Sigmoid colon (tissue), 7 donors: ENCODE measurements at regions of chr14 and their contacts with region 1.

Region 1: DNA sequence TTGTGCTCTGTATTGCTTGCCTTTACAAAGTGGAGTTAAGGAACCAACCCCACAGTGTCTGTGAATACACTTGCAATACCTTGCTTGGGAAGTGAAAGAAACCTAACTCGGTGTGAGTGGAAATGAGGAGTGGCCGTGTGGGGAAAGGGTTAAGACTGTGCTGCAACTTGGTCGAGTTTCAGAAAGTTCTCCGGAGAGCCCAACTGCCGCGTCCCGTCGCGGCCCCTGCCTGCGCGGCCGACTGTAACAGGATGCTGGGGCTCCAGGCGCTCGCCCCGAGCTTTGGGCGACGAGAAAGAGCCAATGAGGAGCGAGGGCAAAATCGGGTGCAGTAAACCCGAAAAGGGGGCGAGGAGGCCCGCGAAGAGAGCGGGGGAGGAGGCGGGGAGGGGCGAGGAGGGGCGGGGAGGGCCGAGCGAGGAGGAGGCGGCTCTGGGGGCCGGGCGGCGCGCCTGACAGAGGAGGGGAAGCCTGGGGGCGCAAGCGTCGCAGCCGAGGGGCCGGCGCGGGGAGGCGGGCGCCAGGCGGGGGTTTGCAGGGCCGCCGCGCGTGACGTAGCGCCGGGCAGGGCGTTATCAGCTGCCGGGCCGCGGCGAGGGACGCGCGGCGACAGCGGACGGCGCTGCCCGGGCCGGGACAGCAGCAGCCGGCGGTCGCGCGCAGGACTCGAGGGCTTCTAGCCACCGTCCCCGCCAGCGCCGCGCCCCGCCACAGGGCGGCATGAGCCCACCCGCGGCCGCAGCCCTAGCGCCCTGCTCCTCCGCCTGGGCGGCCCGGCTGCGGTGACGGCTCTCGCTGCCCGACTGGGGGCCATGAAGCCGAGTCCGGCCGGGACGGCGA is at the start of gene DACT1:
- DNase-seq: peak; percentile 84
- H3K4me3 ChIP-seq: peak within 1 kb of the TSS; percentile 44 to 91 (median 78)
- H3K27ac ChIP-seq: peak within 1 kb of the TSS; percentile 87 to 97 (median 93)
- H3K4me1 ChIP-seq: peaks cover 0 to 48% (median 23%) of the 10 kb centered on the region in 4 donors
- H3K27me3 ChIP-seq: no peaks in the 10 kb centered on the region
- CTCF ChIP-seq: no peak
- EP300 ChIP-seq: no peak
- POLR2A ChIP-seq: no peak
- total RNA-seq, gene DACT1: 5.9 to 21.2 (median 12.1) TPM

Region 2: GRCh38 chr14:58501214-58501816 is 136.3 kb before region 1 on chr14:
- intact Hi-C with region 1: loop called (anchors 2 kb)
- DNase-seq: no peak
- H3K4me3 ChIP-seq: no peak overlapping the region
- H3K27ac ChIP-seq: no peak overlapping the region
- H3K4me1 ChIP-seq: no peaks in the 10 kb centered on the region
- H3K27me3 ChIP-seq: no peaks in the 10 kb centered on the region
- CTCF ChIP-seq: peak; percentile 63 to 85 (median 78)
- EP300 ChIP-seq: no peak
- POLR2A ChIP-seq: no peak

Region 3: GRCh38 chr14:58565832-58566231 is 71.8 kb before region 1 on chr14:
- intact Hi-C with region 1: loop called (anchors 5 kb)
- DNase-seq: no peak
- H3K4me3 ChIP-seq: no peak overlapping the region
- H3K27ac ChIP-seq: peak overlapping the region in 2 of 4 donors; percentile 25 to 51
- H3K4me1 ChIP-seq: peaks cover 0 to 41% (median 32%) of the 10 kb centered on the region in 4 donors
- H3K27me3 ChIP-seq: no peaks in the 10 kb centered on the region
- CTCF ChIP-seq: no peak
- EP300 ChIP-seq: no peak
- POLR2A ChIP-seq: no peak

Region 4: DNA sequence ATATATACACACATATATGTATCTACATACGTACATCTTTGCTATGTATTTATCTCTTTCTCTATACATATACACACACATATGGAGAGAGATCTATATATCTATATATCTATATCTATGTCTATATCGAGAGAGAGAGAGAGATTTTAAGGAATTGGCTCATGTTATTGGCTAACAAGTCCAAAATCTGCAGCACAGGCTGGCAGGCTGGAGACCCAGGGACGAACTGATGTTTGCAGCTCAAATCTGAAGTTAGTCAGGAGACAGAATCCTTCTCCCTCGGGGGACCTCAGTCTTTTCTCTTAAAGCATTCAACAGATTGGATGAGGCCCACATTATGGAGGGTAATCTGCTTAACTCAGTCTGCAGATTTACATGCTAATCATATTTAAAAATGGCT is 40.6 kb before region 1 on chr14:
- intact Hi-C with region 1: no loop called
- DNase-seq: no peak
- H3K4me3 ChIP-seq: no peak overlapping the region
- H3K27ac ChIP-seq: no peak overlapping the region
- H3K4me1 ChIP-seq: no peaks in the 10 kb centered on the region
- H3K27me3 ChIP-seq: no peaks in the 10 kb centered on the region
- CTCF ChIP-seq: no peak
- EP300 ChIP-seq: no peak
- POLR2A ChIP-seq: no peak

Region 5: GRCh38 chr14:58731465-58732330 is 94.1 kb after region 1 on chr14:
- intact Hi-C with region 1: no loop called
- DNase-seq: no peak
- H3K4me3 ChIP-seq: no peak overlapping the region
- H3K27ac ChIP-seq: peak overlapping the region in 1 of 4 donors; percentile 5
- H3K4me1 ChIP-seq: peaks cover 0 to 13% (median 7%) of the 10 kb centered on the region in 4 donors
- H3K27me3 ChIP-seq: no peaks in the 10 kb centered on the region
- CTCF ChIP-seq: no peak
- EP300 ChIP-seq: no peak
- POLR2A ChIP-seq: no peak

Region 6: DNA sequence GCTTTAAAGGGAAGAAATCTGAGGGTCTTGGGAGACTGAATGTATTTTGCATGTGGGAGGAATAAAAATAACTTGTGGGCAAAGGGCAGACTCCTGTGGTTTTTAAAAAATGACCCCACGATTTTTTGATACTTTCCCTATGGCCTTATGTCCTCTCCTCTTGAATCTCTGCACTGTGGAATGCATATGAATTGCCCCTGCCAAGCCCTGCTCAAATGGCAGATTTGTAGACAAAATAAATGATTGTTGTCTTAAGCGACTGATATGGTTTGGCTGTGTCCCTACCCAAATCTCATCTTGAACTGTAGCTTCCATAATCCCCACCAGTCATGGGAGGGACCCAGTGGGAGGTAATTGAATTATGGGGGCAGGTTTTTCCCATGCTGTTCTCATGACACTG is 224.0 kb after region 1 on chr14:
- intact Hi-C with region 1: no loop called
- DNase-seq: no peak
- H3K4me3 ChIP-seq: no peak overlapping the region
- H3K27ac ChIP-seq: no peak overlapping the region
- H3K4me1 ChIP-seq: no peaks in the 10 kb centered on the region
- H3K27me3 ChIP-seq: no peaks in the 10 kb centered on the region
- CTCF ChIP-seq: no peak
- EP300 ChIP-seq: no peak
- POLR2A ChIP-seq: no peak

Region 7: GRCh38 chr14:59028476-59029202 is 391.0 kb after region 1 on chr14:
- intact Hi-C with region 1: loop called (anchors 10 kb)
- DNase-seq: peak; percentile 70
- H3K4me3 ChIP-seq: no peak overlapping the region
- H3K27ac ChIP-seq: no peak overlapping the region
- H3K4me1 ChIP-seq: peaks cover 0 to 10% (median 5%) of the 10 kb centered on the region in 4 donors
- H3K27me3 ChIP-seq: no peaks in the 10 kb centered on the region
- CTCF ChIP-seq: peak in 3 of 4 experiments; percentile 48 to 78 (median 57)
- EP300 ChIP-seq: no peak
- POLR2A ChIP-seq: no peak

Region 8: DNA sequence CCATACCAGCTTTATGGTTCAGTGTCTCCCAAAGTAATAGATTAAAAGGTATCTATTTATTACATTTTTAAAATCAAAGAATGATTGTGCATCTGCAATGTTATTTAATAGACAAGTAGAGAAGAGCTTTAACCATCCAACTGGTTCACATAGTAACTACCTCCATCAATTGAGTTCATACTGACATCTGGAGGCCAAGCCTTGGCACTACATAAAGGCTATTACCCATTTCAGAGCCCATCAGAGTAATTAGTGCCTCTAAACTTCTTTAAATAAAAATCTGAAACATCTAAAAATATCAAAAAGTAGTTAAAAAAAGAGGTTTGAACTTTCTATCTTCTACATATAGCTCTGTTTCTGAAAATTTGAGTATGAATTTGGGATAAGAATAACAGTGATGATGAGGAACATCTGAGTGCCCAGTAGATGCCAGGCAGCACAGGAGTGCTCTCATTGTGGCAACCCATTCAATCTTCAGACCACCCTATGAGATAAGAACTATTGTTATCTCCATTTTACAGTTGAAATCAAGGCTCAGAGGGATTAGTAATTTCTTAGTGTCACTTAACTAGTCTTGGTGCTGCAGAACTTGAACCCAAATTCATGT is 417.9 kb after region 1 on chr14:
- intact Hi-C with region 1: loop called (anchors 2 kb)
- DNase-seq: no peak
- H3K4me3 ChIP-seq: no peak overlapping the region
- H3K27ac ChIP-seq: no peak overlapping the region
- H3K4me1 ChIP-seq: no peaks in the 10 kb centered on the region
- H3K27me3 ChIP-seq: no peaks in the 10 kb centered on the region
- CTCF ChIP-seq: peak; percentile 12 to 66 (median 44)
- EP300 ChIP-seq: no peak
- POLR2A ChIP-seq: no peak

Region 9: GRCh38 chr14:59483900-59484638 is 846.5 kb after region 1 on chr14 and contains the starts of genes JKAMP and L3HYPDH:
- intact Hi-C with region 1: loop called (anchors 10 kb)
- DNase-seq: peak; percentile 98
- H3K4me3 ChIP-seq: peak within 1 kb of the TSS; percentile 71 to 94 (median 79)
- H3K27ac ChIP-seq: peak within 1 kb of the TSS; percentile 90 to 95 (median 94)
- H3K4me1 ChIP-seq: peaks cover 0 to 70% (median 53%) of the 10 kb centered on the region in 4 donors
- H3K27me3 ChIP-seq: no peaks in the 10 kb centered on the region
- CTCF ChIP-seq: peak; percentile 38 to 68 (median 52)
- EP300 ChIP-seq: peak in 1 of 4 donors; percentile 37
- POLR2A ChIP-seq: peak; percentile 71 to 74
- total RNA-seq, gene JKAMP: 26.6 to 49.0 (median 37.5) TPM
- total RNA-seq, gene L3HYPDH: 23.9 to 46.0 (median 30.4) TPM